ENCODE measurements at regions of chr19 and their contacts with region 1.

Region 1: DNA sequence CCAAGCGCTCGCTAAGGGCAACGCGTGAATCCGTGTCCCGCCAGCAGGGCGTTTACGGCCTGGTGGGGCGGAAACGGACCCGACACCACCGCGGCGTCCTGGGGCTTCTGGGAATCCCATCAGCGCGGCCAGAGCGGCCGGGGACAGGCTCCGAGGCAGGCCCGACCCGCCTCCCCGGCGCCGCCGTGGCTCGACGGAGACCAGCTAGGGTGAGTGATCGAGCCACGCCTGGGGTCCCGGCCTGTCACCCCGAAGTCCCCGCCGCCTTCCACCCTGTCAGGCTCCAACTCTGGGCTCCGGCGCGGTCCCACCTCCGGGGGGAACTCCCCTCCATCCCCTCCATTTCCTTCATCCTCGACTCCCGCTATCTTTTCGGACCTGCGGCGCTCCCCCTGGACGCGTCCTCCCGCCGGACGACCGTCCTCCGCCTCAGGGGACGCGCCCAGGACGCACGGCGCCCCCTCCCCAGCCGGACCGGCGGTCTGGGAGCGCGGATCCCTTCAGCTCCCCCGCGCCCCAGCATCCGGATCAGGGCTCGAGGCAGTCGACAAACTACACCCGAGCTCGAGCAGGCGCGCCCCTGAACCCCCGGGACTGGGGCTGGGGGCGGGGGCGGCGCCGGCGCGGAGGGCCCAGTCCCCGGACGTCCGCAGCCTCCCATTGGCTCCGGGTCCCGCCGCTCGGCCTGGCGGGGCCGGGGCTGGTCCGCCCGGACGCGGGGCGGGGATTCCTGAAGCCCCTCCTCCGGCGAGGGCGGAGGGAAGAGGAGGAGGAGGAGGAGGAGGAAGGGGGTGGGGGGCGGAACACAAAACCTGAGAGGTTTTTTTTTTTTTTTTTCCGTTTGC is 638 bp upstream of the BICRA start:
- DNase-seq: peak; percentile 92
- H3K4me3 ChIP-seq: peak overlapping the region; percentile 78 to 93
- H3K27ac ChIP-seq: peak overlapping the region; percentile 96 to 97
- H3K4me1 ChIP-seq: peaks cover 5% of the 10 kb centered on the region
- H3K27me3 ChIP-seq: no peaks in the 10 kb centered on the region
- CTCF ChIP-seq: peak in 2 of 4 experiments; percentile 48 to 51
- POLR2A ChIP-seq: peak; percentile 97

Region 2: GRCh38 chr19:47370045-47370611 is 238.2 kb before region 1 on chr19:
- intact Hi-C with region 1: no loop called
- DNase-seq: no peak
- H3K4me3 ChIP-seq: no peak overlapping the region
- H3K27ac ChIP-seq: no peak overlapping the region
- H3K4me1 ChIP-seq: no peaks in the 10 kb centered on the region
- H3K27me3 ChIP-seq: no peaks in the 10 kb centered on the region
- CTCF ChIP-seq: no peak
- POLR2A ChIP-seq: no peak

Region 3: DNA sequence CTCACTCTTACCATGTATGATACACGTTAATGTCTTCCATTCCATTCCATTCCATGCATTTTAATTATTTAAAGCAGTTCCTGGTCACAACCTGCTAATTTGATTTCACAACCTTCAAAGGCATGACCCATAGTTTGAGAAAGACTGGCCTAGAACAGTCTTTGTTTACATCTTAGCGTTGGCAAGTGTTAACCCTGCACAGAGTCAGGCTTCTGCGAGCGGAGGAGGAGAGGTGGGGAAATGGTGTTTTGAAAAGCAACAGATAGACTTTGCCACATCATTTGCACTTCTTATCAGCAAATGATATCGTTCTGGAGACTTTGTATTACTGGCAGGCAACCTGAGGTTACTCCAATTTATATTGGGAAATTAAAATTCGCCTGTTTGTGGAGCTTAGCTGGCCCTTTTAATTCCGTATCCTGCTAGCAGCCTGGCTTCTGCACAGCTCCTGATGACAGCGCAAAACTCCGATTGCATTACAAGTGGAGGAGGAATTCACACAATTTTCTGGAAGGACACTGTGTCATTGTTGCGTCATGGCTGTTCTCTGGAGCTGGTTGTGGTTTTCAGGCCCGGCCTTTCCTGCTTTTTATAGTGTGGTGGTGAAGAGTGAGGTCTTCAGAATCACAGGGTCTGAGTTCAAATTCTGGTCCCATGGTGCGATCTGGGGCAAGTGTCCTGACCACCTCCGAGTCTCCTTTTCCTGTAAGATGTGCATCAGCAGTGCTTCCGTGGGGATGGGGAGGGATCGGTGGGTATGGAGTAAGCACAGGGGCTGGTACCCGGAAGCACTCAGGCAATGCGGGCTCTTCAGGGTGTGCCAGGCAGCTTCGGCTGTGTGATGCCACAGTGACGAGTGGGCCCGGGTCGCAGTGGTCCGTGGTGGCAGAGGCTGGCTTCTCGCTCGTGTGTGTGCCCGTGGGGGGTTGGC is 55.8 kb after region 1 on chr19:
- intact Hi-C with region 1: loop called (anchors 1 kb)
- DNase-seq: peak; percentile 79
- H3K4me3 ChIP-seq: peak overlapping the region in 1 of 2 donors; percentile 5
- H3K27ac ChIP-seq: peak overlapping the region; percentile 94 to 95
- H3K4me1 ChIP-seq: peaks cover 24% of the 10 kb centered on the region
- H3K27me3 ChIP-seq: no peaks in the 10 kb centered on the region
- CTCF ChIP-seq: no peak
- POLR2A ChIP-seq: peak; percentile 26